BJ (cell line): ENCODE measurements at regions of chr12 and their contacts with region 1.

Region 1: GRCh38 chr12:49060237-49061156 is at the start of gene KMT2D:
- DNase-seq: peak; percentile 39
- H3K4me3 ChIP-seq: peak within 1 kb of the TSS; percentile 88
- H3K27me3 ChIP-seq: no peaks in the 10 kb centered on the region
- CTCF ChIP-seq: peak; percentile 49
- polyA plus RNA-seq, gene KMT2D: 8.2 and 9.7 TPM in 2 replicates

Region 2: GRCh38 chr12:49079793-49080192 is 19.3 kb after region 1 on chr12:
- CTCF ChIA-PET with region 1: interaction called, 98 read pairs
- POLR2A ChIA-PET with region 1: no interaction called
- DNase-seq: no peak
- H3K4me3 ChIP-seq: no peak overlapping the region
- H3K27me3 ChIP-seq: peaks cover 8% of the 10 kb centered on the region
- CTCF ChIP-seq: no peak

Region 3: DNA sequence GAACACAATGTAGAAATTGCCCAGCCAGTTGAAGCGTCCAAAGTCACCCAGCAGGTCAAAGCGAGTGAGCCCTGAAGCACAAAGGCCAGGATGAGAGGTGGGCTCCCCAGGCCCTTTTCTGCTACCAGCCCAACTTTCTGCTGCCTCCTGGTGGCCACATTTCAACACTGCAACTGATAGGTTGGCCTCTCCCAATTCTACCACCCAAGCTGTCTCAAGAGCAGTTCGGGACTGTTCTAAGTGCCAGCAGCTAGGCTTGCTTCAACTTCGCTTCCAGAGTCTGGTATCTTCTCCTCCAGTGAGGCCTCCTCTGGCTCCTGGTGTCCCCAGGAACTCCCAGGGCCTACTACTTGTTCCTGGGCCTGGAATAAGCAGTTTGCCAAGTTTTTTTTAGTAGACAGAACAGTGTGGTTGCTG is 37.5 kb after region 1 on chr12:
- CTCF ChIA-PET with region 1: interaction called, 27 read pairs
- POLR2A ChIA-PET with region 1: no interaction called
- DNase-seq: no peak
- H3K4me3 ChIP-seq: no peak overlapping the region
- H3K27me3 ChIP-seq: peaks cover 8% of the 10 kb centered on the region
- CTCF ChIP-seq: peak; percentile 85

Region 4: DNA sequence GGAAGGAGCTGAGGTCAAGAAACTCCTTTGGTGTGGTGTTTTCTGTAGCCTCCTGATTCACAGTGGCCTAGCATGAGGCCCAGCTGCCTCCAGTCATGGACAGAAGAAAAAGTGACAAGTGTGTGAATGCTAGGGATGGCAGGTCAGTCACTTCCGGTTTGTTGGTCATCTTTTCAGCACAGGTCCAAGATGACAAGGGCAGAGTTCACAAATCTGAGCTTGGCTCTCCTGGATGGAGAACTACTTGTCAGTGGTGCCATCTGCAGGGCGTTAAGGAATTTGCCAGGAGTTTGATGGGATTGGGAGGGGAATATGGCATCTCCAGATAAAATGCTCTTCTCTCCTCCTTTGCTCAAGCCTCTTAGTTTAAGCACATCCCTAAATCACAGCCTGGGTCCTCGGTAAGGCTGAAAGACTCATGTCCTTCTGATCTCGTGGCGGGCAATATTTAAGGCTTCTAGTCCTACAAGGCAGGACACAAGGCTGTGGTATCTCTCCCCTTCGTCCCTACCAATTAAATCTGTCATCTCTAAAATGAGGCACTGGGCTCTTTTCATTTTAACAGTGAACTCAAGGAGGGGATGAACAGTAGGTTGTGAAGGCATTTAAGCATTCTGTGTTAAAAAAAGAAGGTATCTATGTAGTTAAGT is 60.7 kb after region 1 on chr12:
- CTCF ChIA-PET with region 1: interaction called, 53 read pairs
- POLR2A ChIA-PET with region 1: no interaction called
- DNase-seq: no peak
- H3K4me3 ChIP-seq: no peak overlapping the region
- H3K27me3 ChIP-seq: no peaks in the 10 kb centered on the region
- CTCF ChIP-seq: peak; percentile 77

Region 5: DNA sequence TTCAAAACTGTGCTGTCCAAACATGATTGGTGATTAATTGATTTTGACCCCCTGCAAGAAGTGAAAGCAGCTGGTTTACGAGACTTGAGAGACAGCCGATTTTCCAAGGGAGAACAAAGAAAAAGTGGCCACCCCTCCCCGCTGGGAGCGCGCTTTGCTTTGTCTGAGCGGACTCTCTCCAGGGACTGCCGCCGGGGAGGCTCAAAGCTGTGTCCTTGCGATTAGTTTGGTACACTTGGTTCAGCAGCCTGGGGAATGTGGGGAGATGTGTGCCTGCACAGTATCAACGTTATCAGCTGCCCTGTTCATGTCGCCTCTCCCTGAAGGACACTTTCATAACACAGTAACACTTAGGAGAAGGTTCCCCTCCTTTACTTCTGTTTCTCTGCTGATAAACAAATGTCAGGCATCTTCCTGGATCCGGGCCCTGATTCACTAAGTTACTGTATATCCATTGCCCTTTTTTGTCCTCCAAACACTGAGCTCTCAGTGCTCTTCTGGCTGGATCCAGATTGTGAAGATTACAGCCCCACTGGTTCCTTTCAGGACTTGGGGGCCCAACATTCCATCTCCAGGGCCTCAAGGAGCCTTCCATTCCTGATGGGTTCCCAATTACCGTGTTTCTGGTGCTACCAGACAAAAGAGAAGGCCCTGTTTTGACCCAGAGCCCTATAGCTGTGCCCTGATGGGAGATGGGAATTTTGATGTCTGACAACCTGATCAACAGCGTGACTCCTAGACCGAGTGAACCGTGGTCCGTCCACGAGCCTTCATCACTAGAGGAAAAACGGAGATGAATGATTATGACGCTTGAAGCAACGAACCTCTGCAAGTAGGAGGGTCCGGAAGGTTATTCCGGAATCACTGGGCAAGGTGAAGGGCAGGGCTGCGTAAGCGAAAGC is 172.7 kb after region 1 on chr12:
- CTCF ChIA-PET with region 1: interaction called, 14 read pairs
- POLR2A ChIA-PET with region 1: no interaction called
- DNase-seq: no peak
- H3K4me3 ChIP-seq: no peak overlapping the region
- H3K27me3 ChIP-seq: no peaks in the 10 kb centered on the region
- CTCF ChIP-seq: no peak